Lower leg skin (tissue), 4 donors: ENCODE measurements at regions of chr17 and their contacts with region 1.

Region 1: GRCh38 chr17:3738562-3739295 is 15.0 kb downstream of the HASPIN start:
- DNase-seq: peak in 1 of 2 donors; percentile 51
- H3K4me3 ChIP-seq: no peak overlapping the region
- CTCF ChIP-seq: no peak
- POLR2A ChIP-seq: no peak

Region 2: DNA sequence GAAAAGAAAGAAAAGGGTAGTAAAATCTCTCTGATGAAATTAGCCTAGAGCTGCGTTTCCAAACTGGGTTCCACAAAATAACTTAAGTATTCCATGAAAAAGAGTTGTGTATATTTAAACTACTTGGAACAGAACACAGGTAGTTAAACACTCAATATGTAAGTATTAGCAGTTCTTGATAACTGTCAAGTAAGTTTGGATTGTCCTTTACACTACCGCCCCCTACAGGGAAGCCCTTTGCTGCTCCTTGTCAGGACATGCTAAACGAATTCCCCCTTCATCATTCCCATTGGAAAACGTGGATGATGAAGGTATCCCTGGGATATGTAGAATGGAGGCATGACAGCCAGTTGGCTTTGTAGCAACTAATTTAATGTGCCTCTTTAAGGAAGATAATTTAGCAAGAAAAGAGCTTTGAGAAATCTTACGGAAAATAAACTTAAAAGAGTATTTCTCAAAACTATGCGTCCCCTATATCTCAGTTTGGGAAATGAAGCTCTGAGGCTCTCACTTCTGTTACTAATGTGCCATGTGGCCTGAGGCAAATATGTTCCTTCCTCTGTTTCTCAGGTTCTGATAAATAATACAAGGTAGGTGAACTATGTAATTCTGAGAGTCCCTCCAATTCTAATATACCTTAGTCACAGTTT is 88.5 kb after region 1 on chr17:
- intact Hi-C with region 1: loop called (anchors 5 kb)
- DNase-seq: peak in 1 of 2 donors; percentile 45
- H3K4me3 ChIP-seq: no peak overlapping the region
- CTCF ChIP-seq: no peak
- POLR2A ChIP-seq: no peak

Region 3: GRCh38 chr17:4032738-4033137 is 294.0 kb after region 1 on chr17:
- intact Hi-C with region 1: no loop called
- DNase-seq: no peak
- H3K4me3 ChIP-seq: no peak overlapping the region
- CTCF ChIP-seq: no peak
- POLR2A ChIP-seq: no peak